ENCODE measurements at regions of chr15 and their contacts with region 1.

Region 1: GRCh38 chr15:42273102-42273899 is at the starts of genes GANC and TMEM87A:
- DNase-seq: peak; percentile 99
- ATAC-seq: peak; percentile 94
- H3K4me3 ChIP-seq: peak within 1 kb of the TSS; percentile 78
- H3K27ac ChIP-seq: peak within 1 kb of the TSS; percentile 97
- H3K4me1 ChIP-seq: peaks cover 5% of the 10 kb centered on the region; the same call in 1 of the 2 replicates
- H3K27me3 ChIP-seq: no peaks in the 10 kb centered on the region
- CTCF ChIP-seq: no peak
- POLR2A ChIP-seq: peak; percentile 96
- RAD21 ChIP-seq: peak; percentile 2; the same call in 1 of the 2 replicates
- total RNA-seq, gene GANC: 16.7 and 19.2 TPM in 2 replicates
- total RNA-seq, gene TMEM87A: 45.3 and 67.2 TPM in 2 replicates

Region 2: GRCh38 chr15:42364529-42364928 is 91.2 kb after region 1 on chr15:
- CTCF ChIA-PET with region 1: no interaction called
- POLR2A ChIA-PET with region 1: no interaction called
- dilution Hi-C with region 1: no loop called
- in situ Hi-C with region 1: no loop called
- intact Hi-C with region 1: no loop called
- DNase-seq: no peak
- ATAC-seq: no peak
- H3K4me3 ChIP-seq: no peak overlapping the region
- H3K27ac ChIP-seq: no peak overlapping the region
- H3K4me1 ChIP-seq: no peaks in the 10 kb centered on the region
- H3K27me3 ChIP-seq: no peaks in the 10 kb centered on the region
- CTCF ChIP-seq: no peak
- POLR2A ChIP-seq: no peak
- RAD21 ChIP-seq: no peak

Region 3: DNA sequence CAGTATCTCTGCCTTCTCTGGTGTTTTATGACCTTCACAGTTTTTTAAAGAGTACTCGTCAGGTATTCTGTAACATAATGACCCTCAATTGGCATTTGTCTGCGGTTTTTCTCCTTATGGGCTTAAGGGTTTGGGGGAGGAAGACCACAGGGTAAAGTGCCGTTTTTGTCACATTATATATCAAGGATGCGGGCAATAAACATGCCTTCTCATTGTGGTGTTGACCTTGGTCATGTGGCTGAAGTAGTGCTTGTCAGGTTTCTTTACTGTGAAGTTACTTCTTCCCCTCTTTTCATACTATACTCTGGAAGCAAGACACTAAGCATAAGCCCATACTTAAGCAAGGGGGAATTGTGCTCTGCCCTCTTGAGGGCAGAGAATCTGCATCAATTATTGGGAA is 102.6 kb after region 1 on chr15:
- CTCF ChIA-PET with region 1: no interaction called
- POLR2A ChIA-PET with region 1: interaction called, 3 read pairs
- dilution Hi-C with region 1: no loop called
- in situ Hi-C with region 1: loop called (anchors 5 kb)
- intact Hi-C with region 1: no loop called
- DNase-seq: no peak
- ATAC-seq: no peak
- H3K4me3 ChIP-seq: no peak overlapping the region
- H3K27ac ChIP-seq: no peak overlapping the region
- H3K4me1 ChIP-seq: 0 out of 2 replicates have a peak, but pooled peaks cover 2% of the 10 kb centered on the region
- H3K27me3 ChIP-seq: no peaks in the 10 kb centered on the region
- CTCF ChIP-seq: no peak
- POLR2A ChIP-seq: no peak
- RAD21 ChIP-seq: no peak

Region 4: DNA sequence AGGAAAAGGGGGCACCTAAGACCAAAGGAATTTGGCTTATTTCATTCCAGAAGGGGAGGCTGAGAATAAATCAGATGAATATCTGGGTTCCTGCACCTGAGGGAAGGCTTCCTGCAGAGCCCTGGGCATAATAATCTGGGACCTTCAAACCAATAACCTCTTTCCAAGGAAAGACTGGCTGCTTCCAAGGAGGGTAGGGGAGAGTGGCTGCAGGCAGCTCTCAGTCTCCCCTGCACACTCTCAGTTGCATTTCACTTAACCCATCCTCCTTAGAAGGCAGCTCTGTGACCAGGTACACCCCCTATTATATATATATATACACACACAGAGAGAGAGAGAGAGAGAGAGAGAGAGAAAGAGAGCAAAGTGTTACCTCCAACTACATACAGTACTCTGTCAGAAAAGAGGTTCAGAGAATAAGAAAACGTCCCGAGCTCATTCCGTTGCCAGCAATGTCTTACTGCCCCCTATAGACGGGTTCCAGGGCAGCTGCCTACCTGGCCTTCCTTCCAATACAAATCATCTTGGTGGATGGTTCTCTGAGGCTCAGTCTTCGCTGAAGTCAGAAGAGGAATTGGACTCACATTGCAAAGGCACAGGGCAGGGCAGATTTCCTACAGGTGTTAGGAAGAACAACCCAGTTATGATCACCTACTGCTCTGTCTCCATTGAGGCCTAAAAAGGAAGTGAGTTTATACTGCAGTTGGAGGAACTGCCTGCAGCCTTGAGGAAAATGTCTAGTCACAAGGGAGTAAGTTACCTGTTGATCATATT is 112.1 kb after region 1 on chr15:
- CTCF ChIA-PET with region 1: interaction called, 6 read pairs
- POLR2A ChIA-PET with region 1: no interaction called
- dilution Hi-C with region 1: no loop called
- in situ Hi-C with region 1: no loop called
- intact Hi-C with region 1: loop called (anchors 1 kb)
- DNase-seq: peak; percentile 62
- ATAC-seq: peak; percentile 95
- H3K4me3 ChIP-seq: no peak overlapping the region
- H3K27ac ChIP-seq: no peak overlapping the region
- H3K4me1 ChIP-seq: peaks cover 6% of the 10 kb centered on the region
- H3K27me3 ChIP-seq: peaks cover 2% of the 10 kb centered on the region; the same call in 1 of the 2 replicates
- CTCF ChIP-seq: peak; percentile 77
- POLR2A ChIP-seq: no peak
- RAD21 ChIP-seq: peak; percentile 81

Region 5: GRCh38 chr15:42427429-42428223 is 154.3 kb after region 1 on chr15:
- CTCF ChIA-PET with region 1: no interaction called
- POLR2A ChIA-PET with region 1: no interaction called
- dilution Hi-C with region 1: no loop called
- in situ Hi-C with region 1: no loop called
- intact Hi-C with region 1: loop called (anchors 1 kb)
- DNase-seq: peak; percentile 95
- ATAC-seq: peak; percentile 81
- H3K4me3 ChIP-seq: no peak overlapping the region
- H3K27ac ChIP-seq: peak overlapping the region; percentile 66; the same call in 1 of the 2 replicates
- H3K4me1 ChIP-seq: peaks cover 3% of the 10 kb centered on the region
- H3K27me3 ChIP-seq: no peaks in the 10 kb centered on the region
- CTCF ChIP-seq: no peak
- POLR2A ChIP-seq: no peak
- RAD21 ChIP-seq: no peak

Region 6: GRCh38 chr15:42457445-42458442 is 184.4 kb after region 1 on chr15:
- CTCF ChIA-PET with region 1: no interaction called
- POLR2A ChIA-PET with region 1: interaction called, 3 read pairs
- dilution Hi-C with region 1: no loop called
- in situ Hi-C with region 1: no loop called
- intact Hi-C with region 1: loop called (anchors 10 kb)
- DNase-seq: peak; percentile 94
- ATAC-seq: peak; percentile 91
- H3K4me3 ChIP-seq: peak overlapping the region; percentile 20; the same call in 1 of the 2 replicates
- H3K27ac ChIP-seq: peak overlapping the region; percentile 82
- H3K4me1 ChIP-seq: peaks cover 7% of the 10 kb centered on the region
- H3K27me3 ChIP-seq: no peaks in the 10 kb centered on the region
- CTCF ChIP-seq: no peak
- POLR2A ChIP-seq: peak; percentile 53; the same call in 1 of the 2 replicates
- RAD21 ChIP-seq: no peak

Measured in IMR-90 (cell line).